ENCODE measurements at regions of chr6 and their contacts with region 1.

Region 1: GRCh38 chr6:7725849-7726415 is at the start of gene BMP6:
- DNase-seq: peak; percentile 93 to 99 (median 98)
- ATAC-seq: peak; percentile 99
- H3K4me3 ChIP-seq: peak within 1 kb of the TSS; percentile 30
- H3K27ac ChIP-seq: no peak within 1 kb of the TSS
- H3K4me1 ChIP-seq: peaks cover 0 to 30% of the 10 kb centered on the region in 2 experiments; a peak in 3 of 5 replicates
- H3K27me3 ChIP-seq: peaks cover 45 to 53% of the 10 kb centered on the region in 2 experiments
- CTCF ChIP-seq: no peak
- EP300 ChIP-seq: no peak
- POLR2A ChIP-seq: no peak
- RAD21 ChIP-seq: no peak
- polyA plus RNA-seq, gene BMP6: 0.01 TPM in 1 of 2 experiments, not detected in the other

Region 2: GRCh38 chr6:7813704-7814103 is 87.8 kb after region 1 on chr6:
- CTCF ChIA-PET with region 1: interaction called, 4 read pairs
- POLR2A ChIA-PET with region 1: no interaction called
- in situ Hi-C with region 1: no loop called
- intact Hi-C with region 1: loop called (anchors 5 kb)
- DNase-seq: peak; percentile 33 to 60 (median 47)
- ATAC-seq: peak; percentile 98
- H3K4me3 ChIP-seq: no peak overlapping the region
- H3K27ac ChIP-seq: no peak overlapping the region
- H3K4me1 ChIP-seq: no peaks in the 10 kb centered on the region
- H3K27me3 ChIP-seq: peaks cover 15 to 16% of the 10 kb centered on the region in 2 experiments; a peak in 4 of 5 replicates
- CTCF ChIP-seq: peak; percentile 68 to 74 (median 70)
- EP300 ChIP-seq: no peak
- POLR2A ChIP-seq: no peak
- RAD21 ChIP-seq: peak; percentile 36 to 71

Region 3: DNA sequence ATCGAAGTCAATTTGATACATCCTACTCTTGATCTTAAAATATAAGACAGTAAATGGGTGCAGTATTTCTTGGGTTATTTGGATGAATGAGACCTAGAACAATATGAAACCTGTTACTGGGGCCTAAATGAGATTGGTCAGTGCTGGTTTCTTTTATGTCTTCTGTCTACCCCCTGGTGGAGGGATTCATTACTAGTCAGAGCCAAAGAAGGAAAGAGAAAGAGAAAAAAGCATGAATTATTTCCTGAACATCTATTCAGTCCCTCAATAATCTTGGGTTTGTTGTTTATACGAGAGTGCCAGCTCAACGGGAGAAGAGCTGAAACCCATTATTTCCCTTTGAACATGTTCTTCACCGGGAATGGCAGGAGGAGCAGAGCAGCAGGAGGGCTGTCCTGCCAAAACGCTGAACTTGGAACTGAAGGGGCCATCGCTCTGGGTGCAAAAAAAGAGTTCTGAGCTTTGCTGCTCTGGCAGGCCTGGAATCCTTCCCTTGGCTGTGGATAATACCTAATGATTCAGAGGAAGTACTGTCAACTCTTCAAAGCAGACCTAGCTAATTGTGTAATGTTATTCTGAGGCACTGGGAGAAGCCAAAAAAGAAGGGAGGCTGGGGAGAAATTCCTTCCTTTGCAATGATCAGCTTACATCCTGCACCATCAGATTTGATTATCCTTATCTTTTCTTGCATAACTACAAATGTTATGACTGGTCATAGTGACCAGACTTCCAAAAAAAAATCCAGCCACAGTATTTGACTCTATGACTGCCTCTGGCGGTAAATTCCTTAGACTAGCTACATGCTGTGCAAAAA is 266.3 kb after region 1 on chr6:
- CTCF ChIA-PET with region 1: interaction called, 21 read pairs
- POLR2A ChIA-PET with region 1: no interaction called
- in situ Hi-C with region 1: loop called (anchors 5 kb)
- intact Hi-C with region 1: loop called (anchors 2 kb)
- DNase-seq: peak; percentile 43 to 64 (median 54)
- ATAC-seq: peak; percentile 85
- H3K4me3 ChIP-seq: no peak overlapping the region
- H3K27ac ChIP-seq: no peak overlapping the region
- H3K4me1 ChIP-seq: no peaks in the 10 kb centered on the region; a peak in 1 of 5 replicates
- H3K27me3 ChIP-seq: peaks cover 0 to 6% of the 10 kb centered on the region in 2 experiments
- CTCF ChIP-seq: peak; percentile 52 to 81 (median 64); a peak in 5 of 6 replicates
- EP300 ChIP-seq: no peak
- POLR2A ChIP-seq: no peak
- RAD21 ChIP-seq: peak; percentile 96 to 97

Region 4: GRCh38 chr6:8063761-8064637 is 338.1 kb after region 1 on chr6 and contains the start of gene BLOC1S5:
- CTCF ChIA-PET with region 1: interaction called, 4 read pairs
- POLR2A ChIA-PET with region 1: interaction called, 4 read pairs
- in situ Hi-C with region 1: no loop called
- intact Hi-C with region 1: loop called (anchors 5 kb)
- DNase-seq: peak; percentile 95 to 99 (median 96)
- ATAC-seq: peak; percentile 96
- H3K4me3 ChIP-seq: peak within 1 kb of the TSS; percentile 78
- H3K27ac ChIP-seq: peak within 1 kb of the TSS; percentile 81
- H3K4me1 ChIP-seq: peaks cover 7 to 13% of the 10 kb centered on the region in 2 experiments
- H3K27me3 ChIP-seq: no peaks in the 10 kb centered on the region; a peak in 1 of 5 replicates
- CTCF ChIP-seq: peak; percentile 20 to 23 (median 20); a peak in 2 of 6 replicates
- EP300 ChIP-seq: peak; percentile 27; the same call in 1 of the 2 replicates
- POLR2A ChIP-seq: peak; percentile 96
- RAD21 ChIP-seq: peak in 1 of 2 experiments; percentile 15; a peak in 2 of 4 replicates
- polyA plus RNA-seq, gene BLOC1S5: 8.5 to 13.1 TPM

Measured in K562 (cell line).